Posterior vena cava (tissue), 2 donors: ENCODE measurements at regions of chr16 and their contacts with region 1.

Region 1: DNA sequence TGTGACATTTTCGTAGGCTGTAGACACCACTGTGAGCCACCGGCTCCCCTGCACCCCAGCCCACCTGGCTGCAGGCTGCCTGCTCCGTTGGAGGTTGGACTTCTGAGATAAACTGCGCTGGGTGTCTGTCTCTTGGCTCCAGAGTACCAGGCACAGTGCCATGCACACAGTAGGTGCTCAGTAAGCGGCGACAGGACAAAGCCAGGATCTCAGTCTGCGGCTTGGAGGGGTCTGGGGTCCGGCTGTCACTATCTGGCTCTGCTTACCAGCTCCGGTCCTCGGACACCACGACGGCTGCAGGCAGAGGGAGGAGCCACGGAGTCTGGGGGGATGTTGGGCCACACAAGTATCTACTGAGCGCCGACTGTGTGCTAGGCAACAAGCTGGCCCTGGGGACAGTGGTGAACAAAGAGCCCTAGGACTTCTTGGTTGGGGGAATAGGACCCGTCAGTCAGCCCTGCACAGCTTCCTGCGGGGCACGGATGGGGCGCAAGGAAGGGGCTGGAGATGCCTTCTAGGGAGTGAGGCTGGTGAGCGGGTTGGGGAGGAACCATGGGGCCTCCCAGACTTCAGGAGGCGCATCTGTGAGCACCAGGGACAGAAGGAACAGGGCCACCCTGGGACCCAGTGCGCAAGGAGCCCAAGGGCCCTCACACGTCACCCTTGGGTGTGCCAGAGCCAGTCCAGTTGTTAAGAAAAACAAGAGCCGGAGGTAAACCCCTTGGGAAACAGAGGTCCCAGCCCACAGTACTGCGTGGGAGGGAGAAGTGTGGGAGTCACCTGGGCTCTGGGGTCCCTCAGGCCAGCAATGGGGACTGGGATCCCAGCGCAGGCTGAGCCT is 17.3 kb downstream of the JPH3 start:
- DNase-seq: no peak

Region 2: DNA sequence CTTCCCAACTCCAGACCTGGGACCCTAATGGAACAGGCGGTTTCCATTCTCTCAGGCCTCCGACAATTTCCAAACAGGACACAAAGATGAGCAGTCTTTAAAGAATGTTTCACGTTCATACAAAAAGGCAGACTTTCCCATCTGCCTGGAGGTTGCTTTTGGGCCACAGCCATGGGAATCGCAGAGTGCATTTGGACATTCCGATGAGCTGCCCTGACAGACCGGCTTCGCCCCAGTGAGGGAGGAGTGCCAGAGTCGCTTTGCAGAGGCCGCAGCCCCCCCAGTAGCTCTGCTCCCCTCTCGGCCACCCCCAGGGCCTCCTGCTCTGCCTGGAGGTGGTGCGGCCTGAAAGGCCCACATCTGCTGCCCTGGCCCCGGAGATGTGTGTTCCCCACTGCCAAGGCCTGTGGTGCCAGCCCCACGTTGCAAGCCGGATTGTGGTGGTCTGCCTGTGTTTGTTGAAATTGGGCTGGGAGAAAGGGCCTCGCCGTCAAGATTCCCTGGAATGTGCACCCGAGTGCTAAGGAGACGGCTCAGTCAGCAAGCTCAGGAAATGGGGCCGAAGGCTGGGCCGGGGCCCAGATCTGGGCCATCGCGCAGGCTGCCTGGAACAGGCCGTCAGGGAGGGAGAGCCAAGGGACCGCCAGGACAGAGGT is 392.2 kb before region 1 on chr16:
- intact Hi-C with region 1: no loop called
- DNase-seq: no peak

Region 3: GRCh38 chr16:87581833-87582203 is 37.8 kb before region 1 on chr16:
- intact Hi-C with region 1: no loop called
- DNase-seq: peak; percentile 91

Region 4: GRCh38 chr16:87828071-87828971 is 208.7 kb after region 1 on chr16:
- intact Hi-C with region 1: loop called in 1 of 2 experiments (anchors 10 kb)
- DNase-seq: no peak